Activated CD4-positive, alpha-beta T cell treated with anti-CD3 and anti-CD28 coated beads, Interleukin-2, amount 10 ng/mL, durations not matched to agents 24 days and 14 days (primary cell): ENCODE measurements at regions of chr15 and their contacts with region 1.

Region 1: GRCh38 chr15:90648137-90649070 is 68.7 kb upstream of the BLM start:
- DNase-seq: peak; percentile 93
- H3K4me3 Mint-ChIP-seq: peak overlapping the region; percentile 70
- H3K27ac Mint-ChIP-seq: peak overlapping the region; percentile 91
- H3K4me1 Mint-ChIP-seq: peaks cover 39% of the 10 kb centered on the region
- H3K27me3 Mint-ChIP-seq: no peaks in the 10 kb centered on the region

Region 2: DNA sequence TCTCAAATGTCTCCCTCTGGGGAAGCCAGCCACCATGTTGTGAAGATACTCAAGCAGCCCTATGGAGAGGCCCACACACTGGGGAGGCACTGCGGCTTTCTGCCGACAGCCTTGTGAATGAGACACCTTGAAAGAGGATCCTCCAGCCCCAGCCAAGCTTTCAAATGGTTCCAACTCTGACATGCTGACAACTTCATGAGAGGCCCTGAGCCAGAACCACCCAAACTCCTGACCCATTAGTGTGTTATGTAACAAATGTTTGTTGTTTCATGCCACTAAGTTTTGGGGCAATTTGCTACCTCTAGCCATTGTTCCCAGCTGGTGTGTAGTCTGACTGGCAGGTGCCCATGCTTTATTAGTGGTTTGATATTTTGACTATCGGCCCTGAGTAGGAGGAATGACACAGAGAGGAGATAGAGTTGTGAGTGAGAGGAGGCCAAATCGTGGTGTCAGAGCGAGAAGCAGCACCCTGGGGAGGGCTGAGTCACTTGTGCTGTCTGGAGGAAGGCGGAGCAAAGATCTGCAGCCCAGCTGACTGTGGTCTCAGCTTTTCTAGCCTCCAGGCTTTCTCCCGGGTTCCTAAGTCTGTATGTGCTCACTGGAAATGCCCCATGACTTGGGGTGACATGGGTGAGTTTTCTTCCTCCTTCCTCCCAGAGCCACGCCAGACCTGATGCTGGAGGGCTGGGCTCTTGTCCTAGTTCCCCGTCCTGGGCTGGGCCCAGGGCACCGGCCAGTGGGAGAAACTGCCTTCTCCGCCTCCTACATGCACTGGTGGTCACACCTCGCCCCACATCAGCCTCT is 12.0 kb after region 1 on chr15:
- intact Hi-C with region 1: loop called (anchors 1 kb)
- DNase-seq: peak; percentile 92
- H3K4me3 Mint-ChIP-seq: peak overlapping the region; percentile 77
- H3K27ac Mint-ChIP-seq: peak overlapping the region; percentile 90
- H3K4me1 Mint-ChIP-seq: peaks cover 79% of the 10 kb centered on the region
- H3K27me3 Mint-ChIP-seq: no peaks in the 10 kb centered on the region

Region 3: GRCh38 chr15:90686435-90687218 is 38.2 kb after region 1 on chr15:
- intact Hi-C with region 1: loop called (anchors 1 kb)
- DNase-seq: peak; percentile 87
- H3K4me3 Mint-ChIP-seq: peak overlapping the region; percentile 58
- H3K27ac Mint-ChIP-seq: peak overlapping the region; percentile 96
- H3K4me1 Mint-ChIP-seq: peaks cover 47% of the 10 kb centered on the region
- H3K27me3 Mint-ChIP-seq: no peaks in the 10 kb centered on the region

Region 4: DNA sequence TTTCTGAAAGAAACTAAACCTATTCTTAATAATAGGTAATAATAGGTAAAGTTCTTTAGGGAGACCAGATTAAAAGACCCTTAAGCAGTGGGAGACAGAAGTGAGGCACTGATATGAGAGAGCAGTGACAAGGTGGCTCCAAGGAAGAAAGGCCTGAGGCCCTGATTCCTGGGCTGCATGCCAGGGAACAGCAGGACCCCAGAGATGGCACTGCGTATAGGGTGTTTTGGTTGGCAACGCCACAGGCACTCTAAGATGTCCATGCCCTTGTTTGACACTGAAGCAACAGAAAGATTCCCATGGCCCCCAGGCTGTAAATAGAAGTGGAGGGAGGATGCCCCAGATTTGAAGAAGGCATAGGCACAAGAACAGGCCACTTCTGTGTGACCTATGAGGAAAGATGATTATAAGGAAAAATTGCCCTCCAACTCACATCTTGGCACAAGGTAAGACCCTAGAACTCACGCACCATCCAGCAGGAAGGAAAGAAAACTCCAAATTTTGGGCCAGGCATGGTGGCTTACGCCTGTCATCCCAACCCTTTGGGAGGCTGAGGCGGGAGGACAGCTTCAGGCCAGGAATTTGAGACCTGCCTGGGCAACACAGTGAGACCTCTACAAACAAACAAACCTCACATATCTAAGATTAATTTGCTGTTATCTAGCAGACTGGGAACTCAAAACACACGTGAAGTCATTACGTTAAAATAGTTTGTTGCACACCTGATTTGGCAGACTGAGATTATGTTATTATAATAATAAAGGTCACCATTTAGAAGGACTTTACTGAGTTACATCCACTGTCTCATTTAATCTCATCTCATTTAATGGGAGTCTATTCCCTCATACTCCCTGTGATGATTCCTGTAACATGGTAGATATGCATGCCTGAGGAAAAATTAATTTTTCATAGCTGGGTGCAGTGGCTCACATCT is 58.3 kb after region 1 on chr15:
- intact Hi-C with region 1: no loop called
- DNase-seq: no peak
- H3K4me3 Mint-ChIP-seq: no peak overlapping the region
- H3K27ac Mint-ChIP-seq: no peak overlapping the region
- H3K4me1 Mint-ChIP-seq: peaks cover 6% of the 10 kb centered on the region
- H3K27me3 Mint-ChIP-seq: no peaks in the 10 kb centered on the region

Region 5: GRCh38 chr15:90716976-90717821 is 68.8 kb after region 1 on chr15 and contains the start of gene BLM:
- intact Hi-C with region 1: loop called (anchors 1 kb)
- DNase-seq: peak; percentile 99
- H3K4me3 Mint-ChIP-seq: peak within 1 kb of the TSS; percentile 88
- H3K27ac Mint-ChIP-seq: peak within 1 kb of the TSS; percentile 96
- H3K4me1 Mint-ChIP-seq: peaks cover 27% of the 10 kb centered on the region
- H3K27me3 Mint-ChIP-seq: no peaks in the 10 kb centered on the region
- total RNA-seq, gene BLM: 64.1 and 66.4 TPM in 2 replicates

Region 6: GRCh38 chr15:90869601-90870353 is 221.4 kb after region 1 on chr15:
- intact Hi-C with region 1: loop called (anchors 5 kb)
- DNase-seq: peak; percentile 86
- H3K4me3 Mint-ChIP-seq: peak overlapping the region; percentile 96
- H3K27ac Mint-ChIP-seq: peak overlapping the region; percentile 96
- H3K4me1 Mint-ChIP-seq: peaks cover 53% of the 10 kb centered on the region
- H3K27me3 Mint-ChIP-seq: no peaks in the 10 kb centered on the region